Posterior vena cava (tissue), 2 donors: ENCODE measurements at regions of chr12 and their contacts with region 1.

Region 1: DNA sequence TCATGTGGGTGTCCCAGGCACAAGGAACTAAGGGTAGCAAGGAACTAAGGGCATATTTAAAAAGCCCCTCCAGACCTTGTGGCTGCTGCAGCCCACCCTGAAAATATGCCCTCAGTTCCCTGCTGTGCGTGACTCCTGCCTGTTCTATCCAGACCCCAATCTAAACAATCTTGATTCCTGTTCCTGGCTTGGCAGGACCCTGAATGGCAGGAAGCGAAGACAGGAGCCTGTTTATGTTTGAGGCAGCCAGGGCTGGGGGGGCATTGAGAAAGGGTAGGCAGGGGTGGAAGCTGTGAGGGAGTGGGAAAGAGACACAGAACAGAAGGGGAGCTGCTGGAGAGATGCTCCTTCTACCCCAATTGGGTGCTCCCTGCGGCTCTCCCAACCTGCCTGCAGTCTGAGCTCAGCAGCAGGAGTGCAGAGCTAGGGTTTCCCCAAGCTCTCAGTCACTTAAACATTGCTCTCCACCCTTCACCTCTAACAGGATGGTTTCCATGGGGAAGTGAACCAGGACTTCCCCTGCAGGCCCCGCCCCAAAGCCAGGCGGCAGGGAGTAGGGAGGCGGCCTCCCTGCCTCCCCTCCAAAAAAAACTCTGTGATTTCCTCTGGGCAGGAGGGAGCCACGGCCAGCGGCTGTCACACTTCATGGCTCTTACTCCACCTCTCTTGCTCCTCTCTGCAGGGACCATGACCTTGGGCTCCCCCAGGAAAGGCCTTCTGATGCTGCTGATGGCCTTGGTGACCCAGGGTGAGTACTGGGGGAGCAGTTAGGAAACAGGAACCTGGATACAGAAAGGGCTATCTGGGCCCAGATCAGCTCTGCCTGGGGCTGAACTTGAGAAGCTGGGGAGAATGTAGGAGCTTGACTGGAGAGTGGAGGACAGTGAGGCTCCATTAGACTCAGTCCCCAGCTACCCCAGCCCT is 4.7 kb downstream of the ACVRL1 start:
- DNase-seq: peak; percentile 57

Region 2: DNA sequence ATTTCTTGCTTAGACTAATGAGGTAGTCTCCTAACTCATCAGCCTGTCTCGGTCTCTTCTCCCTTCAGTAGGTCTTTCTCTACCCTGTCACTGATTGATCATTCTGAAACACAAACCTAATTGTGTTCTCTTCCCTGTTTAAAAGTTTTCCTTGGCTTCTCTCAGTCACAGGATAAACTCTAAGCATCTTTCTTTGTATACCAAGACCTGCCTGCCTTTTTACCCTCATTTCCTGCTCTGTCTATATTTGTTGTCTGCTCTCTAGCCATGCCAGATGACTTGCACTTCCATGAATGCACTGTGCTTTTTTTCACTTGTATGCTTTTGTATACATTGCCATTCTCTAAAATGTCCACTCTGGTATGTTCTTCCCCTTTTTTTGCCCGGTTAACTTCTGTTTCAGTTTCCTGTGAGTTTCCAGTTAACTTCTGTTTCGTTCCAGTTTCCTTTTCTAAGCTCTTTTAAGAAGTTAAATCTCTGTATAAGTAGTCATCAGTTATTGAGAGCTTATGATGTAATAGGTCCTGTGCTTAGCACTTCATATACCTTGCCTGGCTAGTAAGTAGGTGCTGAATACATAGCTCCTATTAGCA is 1394.5 kb before region 1 on chr12:
- intact Hi-C with region 1: no loop called
- DNase-seq: no peak

Region 3: GRCh38 chr12:51951199-51951842 is 39.3 kb after region 1 on chr12 and contains the start of gene ACVR1B:
- intact Hi-C with region 1: no loop called
- DNase-seq: peak; percentile 97
- total RNA-seq, gene ACVR1B: 20.0 to 22.4 TPM

Region 4: GRCh38 chr12:51980051-51980808 is 68.2 kb after region 1 on chr12:
- intact Hi-C with region 1: loop called in 1 of 2 experiments (anchors 10 kb)
- DNase-seq: peak; percentile 88